ENCODE measurements at regions of chr9 and their contacts with region 1.

Region 1: DNA sequence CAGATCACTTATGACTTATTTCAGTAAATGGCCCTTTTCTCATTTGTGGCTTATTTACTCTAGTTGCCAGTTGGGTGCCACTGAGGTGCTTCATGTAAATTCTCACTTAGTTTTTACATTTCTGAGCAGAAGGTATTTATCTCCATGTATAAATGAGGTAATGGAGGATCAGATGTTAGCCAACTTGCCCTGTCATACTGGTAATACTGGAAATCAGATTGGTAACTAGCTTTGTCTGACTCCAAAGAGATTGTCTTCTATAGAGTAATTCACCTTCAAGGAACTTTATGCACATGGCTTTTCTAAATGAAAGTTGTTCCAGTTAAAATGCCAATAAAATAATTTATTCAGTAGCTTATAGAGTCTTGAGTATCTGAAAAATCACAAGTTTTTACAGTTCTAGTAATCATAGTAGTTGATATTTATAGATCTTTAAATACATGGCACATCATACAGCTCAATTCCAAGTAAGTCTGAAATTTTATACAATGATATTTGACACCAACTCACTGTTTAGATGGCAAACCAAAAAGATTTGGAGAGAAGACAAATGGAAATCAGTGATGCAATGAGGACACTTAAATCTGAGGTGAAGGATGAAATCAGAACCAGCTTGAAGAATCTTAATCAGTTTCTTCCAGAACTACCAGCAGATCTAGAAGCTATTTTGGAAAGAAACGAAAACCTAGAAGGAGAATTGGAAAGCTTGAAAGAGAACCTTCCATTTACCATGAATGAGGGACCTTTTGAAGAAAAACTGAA is 28.8 kb downstream of the RAB14 start:
- DNase-seq: no peak
- ATAC-seq: no peak
- H3K4me3 ChIP-seq: no peak overlapping the region
- H3K4me3 Mint-ChIP-seq: no peak overlapping the region
- H3K27ac ChIP-seq: peak overlapping the region in 1 of 2 donors; percentile 64
- H3K27ac Mint-ChIP-seq: no peak overlapping the region
- H3K4me1 ChIP-seq: no peaks in the 10 kb centered on the region
- H3K4me1 Mint-ChIP-seq: peaks cover 7% of the 10 kb centered on the region
- H3K27me3 ChIP-seq: no peaks in the 10 kb centered on the region
- H3K27me3 Mint-ChIP-seq: no peaks in the 10 kb centered on the region
- CTCF ChIP-seq: no peak

Region 2: DNA sequence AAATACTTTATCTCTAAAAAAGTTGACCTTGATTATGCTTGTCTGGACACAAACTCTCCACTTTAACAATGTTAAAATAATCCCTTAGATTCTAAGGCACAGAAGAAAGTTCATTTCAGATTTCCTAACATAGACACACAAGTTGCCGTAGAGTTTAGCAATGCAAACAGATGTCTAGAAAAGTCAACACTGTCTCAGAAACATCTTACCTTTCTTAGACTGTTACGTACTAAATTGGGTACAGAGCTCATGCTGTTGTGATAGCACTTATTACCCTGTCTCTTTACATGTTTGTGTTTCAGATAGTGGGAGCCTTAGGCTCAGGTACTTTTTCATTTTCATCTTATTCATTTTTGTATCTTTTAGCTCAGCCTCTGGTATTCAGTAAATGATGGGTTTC is 174.8 kb before region 1 on chr9:
- CTCF ChIA-PET with region 1: no interaction called
- POLR2A ChIA-PET with region 1: no interaction called
- intact Hi-C with region 1: no loop called
- DNase-seq: no peak
- ATAC-seq: no peak
- H3K4me3 ChIP-seq: no peak overlapping the region
- H3K4me3 Mint-ChIP-seq: no peak overlapping the region
- H3K27ac ChIP-seq: no peak overlapping the region
- H3K27ac Mint-ChIP-seq: no peak overlapping the region
- H3K4me1 ChIP-seq: no peaks in the 10 kb centered on the region
- H3K4me1 Mint-ChIP-seq: no peaks in the 10 kb centered on the region
- H3K27me3 ChIP-seq: no peaks in the 10 kb centered on the region
- H3K27me3 Mint-ChIP-seq: no peaks in the 10 kb centered on the region
- CTCF ChIP-seq: no peak

Region 3: DNA sequence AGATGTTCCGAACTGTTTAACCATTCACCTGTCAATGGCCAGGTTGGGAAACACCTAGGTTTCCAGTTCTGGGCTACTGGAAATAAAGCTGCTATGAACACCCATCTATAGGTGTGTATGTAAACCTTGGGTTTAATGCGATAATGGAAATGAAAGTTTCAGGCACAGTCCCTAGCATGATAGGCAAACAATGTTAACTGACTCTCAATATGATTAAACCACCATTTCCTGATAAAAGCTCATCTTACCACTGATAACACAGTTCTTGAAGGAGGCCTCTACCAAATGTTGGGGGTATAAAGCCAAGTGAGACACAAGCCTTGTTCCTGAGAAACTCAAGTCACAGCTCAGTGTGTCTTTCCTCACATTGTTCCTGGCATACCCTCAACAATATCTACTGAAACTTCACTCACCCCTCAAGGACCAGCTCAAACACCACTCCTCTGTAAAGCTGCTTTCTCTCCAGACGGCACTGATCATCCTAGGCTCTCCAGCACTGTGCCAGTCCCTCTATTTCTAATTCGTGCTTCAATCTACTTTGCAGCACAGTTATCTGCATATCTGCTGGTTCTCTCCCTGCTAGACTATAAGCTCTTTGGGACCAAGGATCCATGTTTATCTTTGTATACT is 13.0 kb after region 1 on chr9:
- CTCF ChIA-PET with region 1: interaction called, 5 read pairs
- POLR2A ChIA-PET with region 1: interaction called, 3 read pairs
- intact Hi-C with region 1: loop called (anchors 2 kb)
- DNase-seq: no peak
- ATAC-seq: no peak
- H3K4me3 ChIP-seq: no peak overlapping the region
- H3K4me3 Mint-ChIP-seq: peak overlapping the region; percentile 23
- H3K27ac ChIP-seq: peak overlapping the region; percentile 34 to 64
- H3K27ac Mint-ChIP-seq: peak overlapping the region; percentile 66
- H3K4me1 ChIP-seq: peaks cover 36 to 43% of the 10 kb centered on the region in 2 donors
- H3K4me1 Mint-ChIP-seq: peaks cover 59% of the 10 kb centered on the region
- H3K27me3 ChIP-seq: no peaks in the 10 kb centered on the region
- H3K27me3 Mint-ChIP-seq: no peaks in the 10 kb centered on the region
- CTCF ChIP-seq: no peak

Region 4: DNA sequence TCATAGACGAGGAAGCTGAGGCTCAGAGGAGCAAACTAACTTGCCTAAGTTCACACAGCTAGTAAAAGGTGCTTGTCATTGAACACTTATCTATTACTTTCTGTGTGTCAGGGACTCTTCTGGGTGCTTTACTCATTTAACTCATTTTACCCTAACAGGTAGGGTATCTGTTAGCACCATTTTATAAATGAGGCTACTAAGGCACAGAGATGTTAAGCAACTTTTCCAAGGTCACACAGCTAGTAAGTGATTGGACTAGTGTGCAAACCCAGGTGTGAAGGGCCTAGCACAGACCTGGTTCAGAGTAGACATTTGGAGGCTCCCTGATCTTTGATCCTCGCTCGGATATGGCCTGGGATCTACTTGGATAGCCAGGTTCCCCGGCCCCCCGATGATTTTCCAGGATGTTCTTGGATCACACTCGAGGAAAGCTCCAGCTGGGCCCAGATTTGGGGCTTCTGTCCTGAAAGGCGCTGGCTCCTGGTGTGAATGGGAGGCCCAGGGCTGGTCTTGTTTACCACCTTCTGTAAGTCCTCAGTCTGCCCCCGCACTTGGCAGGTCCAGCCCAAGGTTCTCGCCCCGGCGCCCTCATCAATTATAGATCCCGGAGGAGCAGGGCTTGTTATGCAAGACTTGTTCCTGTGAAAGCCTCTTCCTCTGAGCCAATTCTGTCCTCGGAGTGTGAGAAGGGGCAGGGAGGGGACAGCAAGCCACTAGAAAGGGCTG is 132.5 kb after region 1 on chr9:
- CTCF ChIA-PET with region 1: no interaction called
- POLR2A ChIA-PET with region 1: no interaction called
- intact Hi-C with region 1: no loop called
- DNase-seq: no peak
- ATAC-seq: no peak
- H3K4me3 ChIP-seq: no peak overlapping the region
- H3K4me3 Mint-ChIP-seq: no peak overlapping the region
- H3K27ac ChIP-seq: no peak overlapping the region
- H3K27ac Mint-ChIP-seq: no peak overlapping the region
- H3K4me1 ChIP-seq: peaks cover 2 to 5% of the 10 kb centered on the region in 2 donors
- H3K4me1 Mint-ChIP-seq: peaks cover 2% of the 10 kb centered on the region
- H3K27me3 ChIP-seq: peaks cover 0 to 5% (median 2%) of the 10 kb centered on the region in 4 experiments
- H3K27me3 Mint-ChIP-seq: peaks cover under 1% of the 10 kb centered on the region
- CTCF ChIP-seq: no peak